ENCODE measurements at regions of chr6 and their contacts with region 1.

Region 1: DNA sequence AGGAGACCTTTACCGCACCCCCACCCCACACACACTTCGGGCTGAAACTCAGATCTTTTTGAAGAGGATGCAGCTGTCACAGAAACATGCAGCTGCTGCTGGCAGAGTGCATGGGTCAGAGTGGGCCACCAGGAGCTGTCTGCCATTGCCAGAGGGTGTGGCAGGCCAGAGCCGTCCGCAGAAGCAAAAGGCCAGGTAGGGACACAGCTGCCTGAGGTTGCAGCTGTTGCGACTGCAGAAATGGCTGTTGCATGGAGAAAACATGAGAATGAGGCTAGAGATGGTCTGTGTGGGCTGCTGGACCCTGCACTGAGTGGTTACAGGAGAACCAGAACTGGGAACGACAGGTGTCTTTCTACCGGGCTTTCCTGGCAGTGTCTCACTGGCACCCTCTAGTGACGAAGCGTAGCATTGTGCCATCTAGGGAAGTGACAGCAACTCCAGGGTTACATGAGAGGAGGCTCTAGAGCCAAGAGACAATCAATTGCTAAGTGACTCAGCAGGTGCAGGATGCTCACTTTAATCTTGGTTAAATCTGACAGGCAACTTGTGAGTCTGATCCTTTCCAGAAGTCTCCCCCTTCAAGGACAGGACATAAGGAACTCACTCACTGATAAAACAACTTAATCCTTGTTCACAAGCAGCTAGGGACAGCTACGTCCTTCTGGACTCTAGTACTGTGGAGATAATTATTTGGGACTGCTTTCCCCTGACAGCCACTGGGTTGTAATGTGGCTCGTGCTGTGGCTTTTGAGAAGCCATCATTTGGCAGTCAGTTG is 29.1 kb upstream of the SERPINB9 start:
- DNase-seq: peak; percentile 80
- ATAC-seq: peak; percentile 94

Region 2: DNA sequence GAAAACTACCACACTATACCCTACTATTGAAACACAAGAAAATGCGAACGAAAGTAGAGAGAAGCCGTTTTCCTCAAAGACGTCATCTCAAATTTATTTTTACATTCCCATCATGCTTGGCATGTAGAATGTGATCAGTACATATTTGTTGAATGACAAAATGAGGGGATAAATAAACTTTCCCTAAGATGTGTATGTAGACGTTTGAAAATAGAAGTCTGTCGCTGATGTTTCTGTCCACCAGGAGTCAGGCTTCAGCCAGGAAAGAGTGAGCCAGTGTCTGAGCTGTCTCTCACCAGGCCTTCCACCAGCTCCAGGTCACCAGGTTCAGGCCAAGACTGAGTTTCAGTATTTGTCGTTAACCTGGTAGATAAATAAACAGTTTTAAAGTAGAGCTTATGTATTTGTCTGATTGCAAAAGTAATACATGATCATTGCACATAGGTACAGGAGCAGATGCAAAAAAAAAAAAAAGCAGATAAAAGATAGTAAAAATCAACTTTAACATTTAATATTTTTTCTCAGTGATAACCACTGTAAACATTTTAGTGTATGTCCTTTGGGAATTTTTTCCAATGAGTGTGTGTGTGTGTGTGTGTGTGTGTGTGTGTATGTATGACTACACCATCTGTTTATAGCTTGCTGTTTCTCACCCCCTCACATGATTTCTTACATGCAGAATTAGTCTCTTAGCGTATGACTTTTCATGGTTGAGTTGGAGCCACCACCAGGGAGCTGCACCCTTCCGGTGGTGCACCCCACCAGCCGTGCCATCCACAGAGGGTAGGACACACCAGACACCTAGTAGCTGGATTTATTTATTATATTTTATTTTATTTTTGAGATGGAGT is 140.8 kb before region 1 on chr6:
- intact Hi-C with region 1: loop called in 1 of 2 experiments (anchors 2 kb)
- DNase-seq: peak; percentile 72
- ATAC-seq: peak; percentile 86 to 87

Region 3: GRCh38 chr6:2846873-2847224 is 85.3 kb before region 1 on chr6:
- intact Hi-C with region 1: loop called in 1 of 2 experiments (anchors 1 kb)
- DNase-seq: no peak
- ATAC-seq: no peak